Activated CD4-positive, alpha-beta T cell treated with anti-CD3 and anti-CD28 coated beads, Interleukin-2, amount 10 ng/mL, durations not matched to agents 24 days and 14 days (primary cell): ENCODE measurements at regions of chr16 and their contacts with region 1.

Region 1: GRCh38 chr16:58336332-58337089 is 41.7 kb upstream of the PRSS54 start:
- DNase-seq: peak; percentile 96
- H3K4me3 Mint-ChIP-seq: peak overlapping the region; percentile 28
- H3K27ac Mint-ChIP-seq: no peak overlapping the region
- H3K4me1 Mint-ChIP-seq: peaks cover 6% of the 10 kb centered on the region
- H3K27me3 Mint-ChIP-seq: no peaks in the 10 kb centered on the region

Region 2: GRCh38 chr16:58348986-58349385 is 12.5 kb after region 1 on chr16:
- intact Hi-C with region 1: no loop called
- DNase-seq: no peak
- H3K4me3 Mint-ChIP-seq: no peak overlapping the region
- H3K27ac Mint-ChIP-seq: no peak overlapping the region
- H3K4me1 Mint-ChIP-seq: no peaks in the 10 kb centered on the region
- H3K27me3 Mint-ChIP-seq: peaks cover 29% of the 10 kb centered on the region

Region 3: DNA sequence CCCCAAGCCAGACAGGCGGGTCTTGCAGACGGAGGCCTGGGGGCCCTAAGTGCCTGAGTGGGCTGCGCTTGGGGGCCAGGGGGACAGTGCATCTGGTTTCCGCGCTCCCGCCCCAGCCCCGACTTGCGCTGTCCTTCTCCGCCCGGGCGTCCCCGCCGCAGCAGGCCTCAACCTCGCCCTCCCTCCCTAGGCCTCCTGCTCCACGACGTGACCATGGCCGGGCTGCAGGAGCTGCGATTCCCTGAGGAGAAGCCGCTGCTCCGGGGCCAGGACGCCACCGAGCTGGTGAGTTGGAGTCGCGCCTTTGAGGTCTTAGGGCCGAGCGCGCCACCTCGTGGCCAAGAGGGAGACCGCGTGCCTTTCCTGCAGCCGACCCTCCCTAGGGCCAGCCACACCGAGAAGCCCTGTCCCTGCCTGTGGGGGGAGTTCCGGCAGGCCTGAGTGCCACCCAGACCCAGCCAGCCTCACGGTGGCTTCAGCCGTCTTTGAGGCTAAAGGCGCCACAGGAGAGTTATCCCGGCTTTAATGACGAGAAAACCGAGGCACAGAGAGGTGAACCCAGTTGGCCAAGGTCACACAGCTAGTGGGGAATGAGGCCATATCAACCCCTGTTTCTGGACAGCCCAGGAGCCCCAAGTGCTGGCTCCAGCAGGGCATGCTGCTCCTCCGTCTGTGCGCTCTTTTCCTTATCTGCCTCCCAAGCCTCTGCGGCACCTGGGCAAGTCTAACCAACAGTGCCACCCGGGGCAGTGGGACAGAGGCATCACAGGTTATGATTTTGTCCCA is 151.2 kb after region 1 on chr16:
- intact Hi-C with region 1: loop called (anchors 1 kb)
- DNase-seq: peak; percentile 91
- H3K4me3 Mint-ChIP-seq: no peak overlapping the region
- H3K27ac Mint-ChIP-seq: no peak overlapping the region
- H3K4me1 Mint-ChIP-seq: no peaks in the 10 kb centered on the region
- H3K27me3 Mint-ChIP-seq: peaks cover 2% of the 10 kb centered on the region

Region 4: GRCh38 chr16:58661199-58661830 is 324.8 kb after region 1 on chr16:
- intact Hi-C with region 1: loop called (anchors 2 kb)
- DNase-seq: peak; percentile 63
- H3K4me3 Mint-ChIP-seq: no peak overlapping the region
- H3K27ac Mint-ChIP-seq: no peak overlapping the region
- H3K4me1 Mint-ChIP-seq: no peaks in the 10 kb centered on the region
- H3K27me3 Mint-ChIP-seq: no peaks in the 10 kb centered on the region